Activated T-helper 1 cell treated with anti-CD3 and anti-CD28 coated beads, Interleukin-12 subunit alpha, Interleukin-12 subunit beta, Interleukin-2, Interleukin-4 antibody, amounts not matched to agents 30 ng/mL and 10 ng/mL and 1 ng/mL, durations not matched to agents 14 hours and 24 hours and 36 hours (primary cell): ENCODE measurements at regions of chr18 and their contacts with region 1.

Region 1: GRCh38 chr18:46173393-46174341 is 69.5 kb downstream of the HAUS1 start:
- DNase-seq: peak; percentile 91
- H3K4me3 Mint-ChIP-seq: peak overlapping the region; percentile 97
- H3K27ac Mint-ChIP-seq: peak overlapping the region; percentile 100
- H3K4me1 Mint-ChIP-seq: peaks cover 51% of the 10 kb centered on the region
- H3K27me3 Mint-ChIP-seq: no peaks in the 10 kb centered on the region

Region 2: GRCh38 chr18:45255197-45255890 is 918.3 kb before region 1 on chr18:
- intact Hi-C with region 1: no loop called
- DNase-seq: no peak
- H3K4me3 Mint-ChIP-seq: no peak overlapping the region
- H3K27ac Mint-ChIP-seq: no peak overlapping the region
- H3K4me1 Mint-ChIP-seq: no peaks in the 10 kb centered on the region
- H3K27me3 Mint-ChIP-seq: peaks cover 3% of the 10 kb centered on the region

Region 3: GRCh38 chr18:46104128-46104911 is 69.3 kb before region 1 on chr18 and contains the start of gene HAUS1:
- intact Hi-C with region 1: loop called (anchors 2 kb)
- DNase-seq: peak; percentile 79
- H3K4me3 Mint-ChIP-seq: peak within 1 kb of the TSS; percentile 96
- H3K27ac Mint-ChIP-seq: peak within 1 kb of the TSS; percentile 90
- H3K4me1 Mint-ChIP-seq: peaks cover 21% of the 10 kb centered on the region
- H3K27me3 Mint-ChIP-seq: peaks cover 2% of the 10 kb centered on the region
- total RNA-seq, gene HAUS1: 41.8 and 42.1 TPM in 2 replicates

Region 4: DNA sequence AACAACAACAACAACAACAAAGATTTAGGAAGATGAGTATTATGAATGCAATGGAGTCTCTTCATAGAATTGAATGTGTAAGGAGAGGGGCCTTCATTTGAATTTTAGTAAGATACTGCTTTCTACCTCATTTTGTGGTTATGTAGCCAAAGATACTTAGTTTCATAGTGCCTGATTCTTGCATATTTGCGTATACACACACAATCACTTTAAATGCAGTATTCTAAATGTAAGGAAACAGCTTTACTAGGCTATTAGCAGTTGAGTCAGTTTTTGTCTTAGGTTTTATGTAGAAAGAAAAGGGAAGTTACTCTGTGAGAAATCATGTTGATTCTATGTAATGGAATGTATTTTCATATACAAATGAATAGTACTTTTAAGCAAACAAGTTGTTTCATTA is 11.1 kb after region 1 on chr18:
- intact Hi-C with region 1: loop called (anchors 2 kb)
- DNase-seq: no peak
- H3K4me3 Mint-ChIP-seq: no peak overlapping the region
- H3K27ac Mint-ChIP-seq: peak overlapping the region; percentile 12
- H3K4me1 Mint-ChIP-seq: peaks cover 34% of the 10 kb centered on the region
- H3K27me3 Mint-ChIP-seq: no peaks in the 10 kb centered on the region

Region 5: GRCh38 chr18:46264235-46264893 is 90.7 kb after region 1 on chr18:
- intact Hi-C with region 1: loop called (anchors 2 kb)
- DNase-seq: no peak
- H3K4me3 Mint-ChIP-seq: no peak overlapping the region
- H3K27ac Mint-ChIP-seq: peak overlapping the region; percentile 66
- H3K4me1 Mint-ChIP-seq: peaks cover 80% of the 10 kb centered on the region
- H3K27me3 Mint-ChIP-seq: no peaks in the 10 kb centered on the region

Region 6: GRCh38 chr18:46660955-46661749 is 487.5 kb after region 1 on chr18:
- intact Hi-C with region 1: loop called (anchors 1 kb)
- DNase-seq: no peak
- H3K4me3 Mint-ChIP-seq: no peak overlapping the region
- H3K27ac Mint-ChIP-seq: no peak overlapping the region
- H3K4me1 Mint-ChIP-seq: no peaks in the 10 kb centered on the region
- H3K27me3 Mint-ChIP-seq: peaks cover 3% of the 10 kb centered on the region